ENCODE measurements at regions of chr12 and their contacts with region 1.

Region 1: DNA sequence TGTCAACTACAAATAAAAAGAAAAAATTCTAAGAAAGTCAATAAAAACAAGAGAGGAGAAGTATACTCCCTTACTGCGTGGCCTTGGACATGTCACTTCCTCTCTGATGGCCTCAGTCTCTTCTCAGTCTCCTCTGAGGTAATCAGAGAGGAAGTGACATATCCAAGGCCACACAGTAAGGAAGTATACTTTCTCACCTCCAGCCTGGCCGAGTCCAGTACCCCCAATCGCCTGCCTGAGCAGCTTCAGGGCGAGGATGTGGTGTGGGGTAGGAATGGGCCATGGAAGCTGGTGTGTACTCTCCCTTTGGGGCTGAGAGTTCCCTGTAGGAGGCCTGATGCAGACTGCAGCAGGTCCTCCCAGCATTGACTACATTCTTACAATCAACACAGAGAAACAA is 15.8 kb downstream of the VDR start:
- DNase-seq: peak; percentile 45
- ATAC-seq: peak; percentile 18
- H3K4me3 Mint-ChIP-seq: peak overlapping the region; percentile 63
- H3K27ac Mint-ChIP-seq: peak overlapping the region; percentile 82
- H3K4me1 Mint-ChIP-seq: peaks cover 79% of the 10 kb centered on the region
- H3K27me3 Mint-ChIP-seq: no peaks in the 10 kb centered on the region

Region 2: DNA sequence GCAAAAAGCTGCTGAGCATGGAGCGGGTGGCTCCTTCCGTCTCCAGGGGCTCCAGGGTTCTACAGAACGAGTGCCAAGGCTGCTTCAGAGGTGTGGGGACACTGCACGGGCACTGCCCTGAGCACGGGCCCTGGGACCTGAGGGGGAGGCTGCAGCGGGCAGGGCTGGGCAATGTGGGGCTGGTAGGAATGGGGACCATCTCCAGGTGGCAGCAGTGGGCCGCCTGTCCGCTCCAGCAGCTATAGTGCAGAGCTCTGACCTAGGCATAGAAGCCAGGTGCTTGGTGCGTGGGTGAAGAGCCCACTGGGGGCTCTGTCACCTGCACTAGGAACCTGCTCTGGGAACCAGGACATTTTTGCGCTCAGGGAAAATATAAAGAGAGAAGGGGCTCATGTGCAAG is 91.6 kb before region 1 on chr12:
- CTCF ChIA-PET with region 1: no interaction called
- POLR2A ChIA-PET with region 1: no interaction called
- intact Hi-C with region 1: no loop called
- DNase-seq: peak; percentile 57
- ATAC-seq: peak; percentile 44
- H3K4me3 Mint-ChIP-seq: no peak overlapping the region
- H3K27ac Mint-ChIP-seq: peak overlapping the region; percentile 42
- H3K4me1 Mint-ChIP-seq: peaks cover 35% of the 10 kb centered on the region
- H3K27me3 Mint-ChIP-seq: no peaks in the 10 kb centered on the region

Region 3: DNA sequence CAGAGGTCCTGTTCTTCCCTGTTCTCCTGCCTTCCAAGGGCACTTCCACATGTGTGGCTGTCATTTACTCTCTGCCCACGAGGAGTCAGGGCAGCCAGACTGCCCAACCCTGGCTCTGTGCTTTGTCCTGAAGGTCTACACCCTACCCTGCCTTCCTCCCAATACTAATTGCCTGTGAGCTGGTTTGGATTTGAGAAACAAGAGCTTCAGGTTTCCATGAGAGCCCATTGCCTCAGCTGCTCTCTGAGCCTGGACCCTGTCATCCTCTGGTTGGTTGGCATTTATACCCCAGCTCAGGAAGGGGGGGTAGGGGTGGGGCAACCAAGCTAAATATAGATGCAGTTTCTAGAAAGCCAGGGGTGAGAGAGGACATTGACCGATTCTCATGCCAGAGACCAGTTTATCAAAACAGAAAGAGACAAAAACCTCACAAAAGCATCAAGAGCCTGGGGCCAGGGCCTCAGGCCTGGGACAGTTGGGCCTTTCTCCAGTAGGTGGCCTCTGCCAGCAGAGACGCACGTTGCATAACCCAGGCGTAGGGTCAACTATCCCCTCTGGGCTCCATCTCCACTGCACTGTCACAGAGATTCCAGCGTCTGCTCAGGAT is 18.8 kb before region 1 on chr12:
- CTCF ChIA-PET with region 1: interaction called, 24 read pairs
- POLR2A ChIA-PET with region 1: interaction called, 69 read pairs
- intact Hi-C with region 1: loop called in 1 of 2 experiments (anchors 1 kb)
- DNase-seq: no peak
- ATAC-seq: no peak
- H3K4me3 Mint-ChIP-seq: no peak overlapping the region
- H3K27ac Mint-ChIP-seq: peak overlapping the region; percentile 85
- H3K4me1 Mint-ChIP-seq: peaks cover 66% of the 10 kb centered on the region
- H3K27me3 Mint-ChIP-seq: no peaks in the 10 kb centered on the region